Mammary epithelial cell (primary cell): ENCODE measurements at regions of chr16 and their contacts with region 1.

Region 1: GRCh38 chr16:31117391-31118197 is at the start of gene KAT8:
- DNase-seq: peak; percentile 98
- H3K4me3 ChIP-seq: peak within 1 kb of the TSS; percentile 57 to 80 (median 65)
- H3K27ac ChIP-seq: peak within 1 kb of the TSS; percentile 100
- H3K4me1 ChIP-seq: peaks cover 14% of the 10 kb centered on the region
- H3K27me3 ChIP-seq: no peaks in the 10 kb centered on the region
- CTCF ChIP-seq: no peak
- total RNA-seq, gene KAT8: 22.7 to 34.0 TPM

Region 2: GRCh38 chr16:30941600-30942425 is 175.8 kb before region 1 on chr16:
- CTCF ChIA-PET with region 1: no interaction called
- dilution Hi-C with region 1: loop called (anchors 10 kb)
- in situ Hi-C with region 1: no loop called
- intact Hi-C with region 1: no loop called
- DNase-seq: peak; percentile 67
- H3K4me3 ChIP-seq: no peak overlapping the region
- H3K27ac ChIP-seq: peak overlapping the region; percentile 11
- H3K4me1 ChIP-seq: peaks cover 24% of the 10 kb centered on the region
- H3K27me3 ChIP-seq: no peaks in the 10 kb centered on the region
- CTCF ChIP-seq: peak; percentile 97 to 98

Region 3: GRCh38 chr16:31094424-31095120 is 23.0 kb before region 1 on chr16 and contains the start of gene VKORC1:
- CTCF ChIA-PET with region 1: no interaction called
- dilution Hi-C with region 1: no loop called
- in situ Hi-C with region 1: no loop called
- intact Hi-C with region 1: loop called (anchors 1 kb)
- DNase-seq: peak; percentile 99
- H3K4me3 ChIP-seq: peak within 1 kb of the TSS; percentile 57 to 98 (median 71)
- H3K27ac ChIP-seq: peak within 1 kb of the TSS; percentile 81
- H3K4me1 ChIP-seq: peaks cover 4% of the 10 kb centered on the region
- H3K27me3 ChIP-seq: no peaks in the 10 kb centered on the region
- CTCF ChIP-seq: no peak
- total RNA-seq, gene VKORC1: 45.7 to 65.0 TPM

Region 4: DNA sequence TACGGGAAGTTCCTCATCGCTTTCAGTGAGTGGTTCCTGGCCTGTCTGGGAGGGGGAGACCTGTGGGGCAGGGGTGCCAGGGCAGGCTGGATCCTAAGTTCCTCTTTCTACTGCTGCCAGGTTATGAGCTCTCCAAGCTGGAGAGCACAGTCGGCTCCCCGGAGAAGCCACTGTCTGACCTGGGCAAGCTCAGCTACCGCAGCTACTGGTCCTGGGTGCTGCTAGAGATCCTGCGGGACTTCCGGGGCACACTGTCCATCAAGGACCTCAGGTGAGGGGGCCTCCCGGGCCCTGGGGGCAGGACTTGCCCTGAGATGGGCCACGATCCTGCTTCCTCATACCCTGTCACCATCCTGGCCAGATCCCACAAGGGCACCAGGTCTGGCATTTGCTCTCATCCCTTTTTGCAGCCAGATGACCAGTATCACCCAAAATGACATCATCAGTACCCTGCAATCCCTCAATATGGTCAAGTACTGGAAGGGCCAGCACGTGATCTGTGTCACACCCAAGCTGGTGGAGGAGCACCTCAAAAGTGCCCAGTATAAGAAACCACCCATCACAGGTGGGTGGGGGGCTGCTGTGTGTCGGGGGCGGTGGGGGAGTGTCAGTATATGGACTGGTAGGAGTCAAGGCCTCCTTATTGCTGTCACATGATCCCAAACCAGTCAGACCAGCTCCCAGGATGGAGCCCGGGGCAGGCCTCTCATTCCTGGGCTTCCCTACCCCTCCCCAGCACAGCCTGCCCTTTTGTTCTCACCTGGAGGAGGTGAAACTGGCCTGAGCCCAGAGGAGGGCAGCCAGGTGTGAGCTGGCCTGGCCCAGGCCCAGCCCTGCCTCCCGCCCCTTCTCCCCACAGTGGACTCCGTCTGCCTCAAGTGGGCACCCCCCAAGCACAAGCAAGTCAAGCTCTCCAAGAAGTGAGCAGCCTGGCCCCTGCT is 13.0 kb after region 1 on chr16:
- CTCF ChIA-PET with region 1: no interaction called
- dilution Hi-C with region 1: no loop called
- in situ Hi-C with region 1: no loop called
- intact Hi-C with region 1: loop called (anchors 1 kb)
- DNase-seq: peak; percentile 93
- H3K4me3 ChIP-seq: no peak overlapping the region
- H3K27ac ChIP-seq: peak overlapping the region; percentile 46
- H3K4me1 ChIP-seq: peaks cover 57% of the 10 kb centered on the region
- H3K27me3 ChIP-seq: no peaks in the 10 kb centered on the region
- CTCF ChIP-seq: peak in 1 of 2 donors; percentile 11

Region 5: DNA sequence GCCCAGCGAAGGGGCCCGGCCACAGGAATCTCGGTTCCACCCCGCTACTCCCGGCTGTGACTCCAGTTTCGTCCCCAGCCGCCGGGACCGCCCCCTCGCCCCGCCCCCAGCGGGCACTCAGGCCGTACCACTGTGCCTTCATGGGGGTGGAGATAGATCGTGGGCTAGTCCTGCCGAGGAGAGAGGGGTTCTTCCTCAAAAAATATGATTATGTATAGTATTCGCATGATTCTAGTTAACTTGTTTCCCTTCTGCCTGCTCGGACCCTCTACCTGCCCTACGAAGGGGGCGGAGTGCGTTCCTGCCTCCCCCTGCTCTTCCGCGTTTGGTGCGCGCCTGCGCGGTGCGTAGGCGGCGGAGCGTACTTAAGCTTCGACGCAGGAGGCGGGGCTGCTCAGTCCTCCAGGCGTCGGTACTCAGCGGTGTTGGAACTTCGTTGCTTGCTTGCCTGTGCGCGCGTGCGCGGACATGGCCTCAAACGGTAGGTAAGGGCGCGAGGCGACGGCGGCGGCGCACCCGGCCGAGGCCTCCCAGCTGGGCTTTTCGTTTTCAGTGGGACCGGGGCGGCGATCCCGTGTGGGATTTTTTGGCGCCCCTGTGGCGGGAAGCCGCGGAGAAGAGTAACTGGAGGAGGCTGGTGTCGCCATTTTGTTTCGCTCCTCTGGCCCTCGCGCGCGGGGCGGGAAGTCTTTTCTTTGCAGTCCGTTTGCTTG is 62.3 kb after region 1 on chr16 and contains the start of gene FUS:
- CTCF ChIA-PET with region 1: no interaction called
- dilution Hi-C with region 1: no loop called
- in situ Hi-C with region 1: no loop called
- intact Hi-C with region 1: loop called (anchors 1 kb)
- DNase-seq: peak; percentile 79
- H3K4me3 ChIP-seq: peak within 1 kb of the TSS; percentile 62 to 95 (median 75)
- H3K27ac ChIP-seq: peak within 1 kb of the TSS; percentile 95
- H3K4me1 ChIP-seq: peaks cover 27% of the 10 kb centered on the region
- H3K27me3 ChIP-seq: no peaks in the 10 kb centered on the region
- CTCF ChIP-seq: no peak
- total RNA-seq, gene FUS: 19.5 to 404 TPM

Region 6: DNA sequence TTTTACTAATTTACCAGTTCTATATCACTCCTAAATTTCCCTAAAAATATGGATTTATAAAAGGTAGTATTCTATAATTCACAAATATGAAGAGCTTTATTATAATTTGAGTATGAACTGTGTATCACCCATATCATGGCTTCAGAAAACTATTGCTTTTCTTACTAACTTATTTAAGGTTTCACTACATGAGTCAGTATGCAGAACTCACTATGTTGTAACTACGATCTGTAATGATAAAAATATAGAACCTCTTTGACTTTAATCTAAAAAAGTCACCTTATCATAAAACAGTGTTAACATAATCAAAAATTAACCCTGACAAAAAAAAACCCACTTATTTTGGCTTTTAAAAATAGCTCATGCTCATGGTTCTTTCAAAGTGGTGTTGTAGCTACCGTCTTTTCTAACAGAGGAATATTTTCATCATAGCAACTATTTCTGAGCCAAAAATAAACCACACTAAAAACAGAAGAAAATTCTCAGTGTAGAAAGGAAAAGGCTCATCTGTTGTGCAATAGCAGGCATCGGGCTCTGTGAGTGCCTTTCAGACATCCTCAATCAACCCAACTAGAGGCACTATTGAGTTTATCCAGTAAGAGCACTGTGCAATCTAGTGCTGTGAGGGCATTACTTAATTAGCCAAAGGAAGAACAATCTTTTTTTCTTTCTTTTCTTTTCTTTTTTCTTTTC is 184.3 kb after region 1 on chr16:
- CTCF ChIA-PET with region 1: no interaction called
- dilution Hi-C with region 1: no loop called
- in situ Hi-C with region 1: no loop called
- intact Hi-C with region 1: no loop called
- DNase-seq: peak; percentile 26
- H3K4me3 ChIP-seq: no peak overlapping the region
- H3K27ac ChIP-seq: no peak overlapping the region
- H3K4me1 ChIP-seq: no peaks in the 10 kb centered on the region
- H3K27me3 ChIP-seq: no peaks in the 10 kb centered on the region
- CTCF ChIP-seq: peak in 1 of 2 donors; percentile 5

Region 7: DNA sequence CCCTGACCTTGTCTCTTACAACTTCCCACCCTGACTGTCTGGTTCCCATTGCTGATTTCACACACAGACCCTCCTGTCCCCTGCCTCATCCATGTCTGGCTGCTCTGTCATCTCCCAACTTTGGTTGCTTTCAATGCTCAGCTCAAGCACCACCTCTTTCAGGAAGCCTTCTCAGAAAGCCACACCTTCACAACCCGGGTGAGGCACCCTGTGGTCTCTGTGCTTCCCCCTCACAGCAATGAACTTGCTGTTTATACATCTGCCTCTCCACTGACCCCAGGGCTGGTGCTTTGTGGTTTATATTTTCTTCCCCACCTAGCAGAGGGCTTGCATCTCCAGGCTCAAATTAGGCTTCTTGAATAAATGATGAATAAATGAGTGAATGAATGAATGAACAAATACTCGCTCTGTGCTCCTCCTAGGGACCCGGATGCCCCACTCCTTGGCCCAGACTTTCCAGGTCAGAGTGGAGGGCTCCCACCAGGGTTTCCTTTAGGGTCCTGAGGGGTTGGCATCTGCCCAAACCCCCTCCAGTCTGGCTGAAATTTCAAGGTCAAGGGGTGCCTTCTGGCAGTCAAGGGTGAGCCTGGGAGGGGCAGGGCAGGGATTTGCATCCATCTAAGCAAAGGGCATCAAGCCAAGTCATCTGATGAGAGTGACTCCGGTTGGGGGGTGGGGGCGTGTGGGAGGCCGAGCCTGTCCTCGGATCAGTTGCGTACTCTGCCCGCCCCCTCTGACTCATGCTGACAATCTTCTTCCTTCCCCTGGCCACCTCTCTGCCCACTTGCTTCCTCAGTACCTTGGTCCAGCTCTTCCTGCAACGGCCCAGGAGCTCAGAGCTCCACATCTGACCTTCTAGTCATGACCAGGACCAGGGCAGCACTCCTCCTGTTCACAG is 237.0 kb after region 1 on chr16 and contains the start of gene ITGAX:
- CTCF ChIA-PET with region 1: interaction called, 13 read pairs
- dilution Hi-C with region 1: no loop called
- in situ Hi-C with region 1: no loop called
- intact Hi-C with region 1: no loop called
- DNase-seq: peak; percentile 32
- H3K4me3 ChIP-seq: no peak within 1 kb of the TSS
- H3K27ac ChIP-seq: no peak within 1 kb of the TSS
- H3K4me1 ChIP-seq: peaks cover 6% of the 10 kb centered on the region
- H3K27me3 ChIP-seq: no peaks in the 10 kb centered on the region
- CTCF ChIP-seq: no peak
- total RNA-seq, gene ITGAX: 0.16 TPM in 1 of 2 donors, not detected in the other